ENCODE measurements at regions of chr22 and their contacts with region 1.

Region 1: GRCh38 chr22:29635734-29636357 is 32.4 kb downstream of the NF2 start:
- DNase-seq: no peak
- H3K4me3 ChIP-seq: no peak overlapping the region
- H3K27ac ChIP-seq: peak overlapping the region in 1 of 3 donors; percentile 41
- H3K4me1 ChIP-seq: peaks cover 10 to 16% of the 10 kb centered on the region in 2 donors
- H3K27me3 ChIP-seq: no peaks in the 10 kb centered on the region
- CTCF ChIP-seq: peak; percentile 34 to 79 (median 62)
- POLR2A ChIP-seq: no peak

Region 2: DNA sequence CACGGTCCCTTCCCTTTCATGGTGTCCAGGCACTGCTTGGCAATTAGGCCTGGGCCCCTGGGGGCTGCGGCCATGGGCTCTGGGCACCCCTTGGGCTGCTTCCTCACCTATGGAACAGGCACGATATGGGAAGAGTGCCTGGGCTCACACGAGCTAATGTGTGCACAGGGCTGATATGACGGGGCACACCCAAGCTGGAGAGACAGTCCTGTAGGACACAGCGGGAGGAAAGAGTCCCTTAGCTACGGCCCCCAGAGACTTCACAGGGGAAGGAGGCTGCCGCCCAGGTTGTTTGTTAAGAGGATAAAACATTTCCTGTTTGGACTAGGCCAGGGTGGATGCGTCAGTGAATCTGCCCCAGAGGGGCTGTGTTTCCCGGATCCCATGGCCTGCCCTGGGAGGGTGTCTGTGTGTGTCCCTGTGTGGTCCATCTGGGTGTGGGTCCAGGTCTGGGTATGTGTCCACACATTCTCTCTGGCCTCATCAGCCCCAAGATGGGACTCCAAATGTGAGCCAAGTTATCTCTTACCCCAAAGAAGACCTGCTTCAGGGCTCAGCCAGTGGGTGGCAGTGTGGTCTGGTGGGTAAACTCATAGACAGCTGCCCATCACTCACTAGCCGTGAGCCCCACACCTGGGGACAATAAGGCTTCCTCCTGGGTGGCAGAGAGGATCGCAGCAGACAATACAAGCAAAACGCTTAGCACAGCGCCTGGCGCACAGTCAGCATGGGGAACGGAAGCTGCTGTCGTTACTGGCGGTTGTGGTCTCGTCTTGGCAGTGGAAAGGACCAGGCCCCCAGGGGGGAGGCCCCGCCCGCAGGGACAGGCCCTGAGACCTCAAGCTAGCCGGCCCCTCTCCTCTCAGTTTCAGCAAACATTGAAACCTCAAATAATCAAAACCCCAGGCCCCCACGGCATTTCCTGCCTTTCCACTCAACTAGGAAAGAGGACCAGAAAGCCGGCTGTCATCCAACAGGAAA is 433.3 kb before region 1 on chr22:
- intact Hi-C with region 1: no loop called
- DNase-seq: peak; percentile 30 to 34
- H3K4me3 ChIP-seq: no peak overlapping the region
- H3K27ac ChIP-seq: peak overlapping the region; percentile 35 to 63 (median 57)
- H3K4me1 ChIP-seq: peaks cover 8 to 17% of the 10 kb centered on the region in 2 donors
- H3K27me3 ChIP-seq: no peaks in the 10 kb centered on the region
- CTCF ChIP-seq: peak in 2 of 6 experiments; percentile 20
- POLR2A ChIP-seq: no peak

Region 3: GRCh38 chr22:29689880-29690213 is 54.0 kb after region 1 on chr22:
- intact Hi-C with region 1: loop called (anchors 10 kb)
- DNase-seq: peak; percentile 32 to 55
- H3K4me3 ChIP-seq: no peak overlapping the region
- H3K27ac ChIP-seq: no peak overlapping the region
- H3K4me1 ChIP-seq: peaks cover 15% of the 10 kb centered on the region in 2 donors
- H3K27me3 ChIP-seq: no peaks in the 10 kb centered on the region
- CTCF ChIP-seq: peak in 5 of 6 experiments; percentile 12 to 56 (median 40)
- POLR2A ChIP-seq: no peak

Region 4: DNA sequence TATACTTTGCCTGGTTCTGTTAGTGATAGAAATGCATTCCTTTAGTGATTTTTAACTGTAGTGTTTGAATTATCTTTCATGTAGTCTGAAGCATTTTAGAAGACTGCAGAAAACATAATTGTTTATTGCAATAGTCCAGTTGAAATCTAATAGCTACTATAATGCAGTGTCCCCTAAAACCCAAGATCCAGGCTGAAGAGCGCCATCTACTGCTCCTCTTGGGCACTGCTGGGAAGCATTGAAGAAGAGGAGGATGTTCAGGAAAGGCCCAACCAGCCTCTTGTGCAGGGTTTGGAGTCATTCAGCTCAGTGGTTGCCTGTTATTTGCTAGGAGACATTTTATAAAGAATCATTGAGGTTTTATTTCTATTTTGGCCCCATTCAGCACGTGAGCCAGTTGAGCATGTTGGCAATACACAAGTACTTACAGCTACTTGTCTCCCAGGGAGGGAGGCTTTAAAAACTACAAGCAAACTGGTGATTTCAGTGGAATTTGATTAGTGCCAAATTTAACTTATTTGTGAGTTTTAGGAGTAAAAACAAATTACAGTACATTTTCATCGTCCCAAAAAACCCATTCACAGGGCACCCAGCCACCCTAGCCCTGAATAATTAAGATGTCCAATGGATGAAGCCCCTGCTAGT is 369.5 kb after region 1 on chr22:
- intact Hi-C with region 1: loop called (anchors 10 kb)
- DNase-seq: peak; percentile 76 to 83
- H3K4me3 ChIP-seq: no peak overlapping the region
- H3K27ac ChIP-seq: no peak overlapping the region
- H3K4me1 ChIP-seq: peaks cover 12 to 18% of the 10 kb centered on the region in 2 donors
- H3K27me3 ChIP-seq: no peaks in the 10 kb centered on the region
- CTCF ChIP-seq: peak; percentile 71 to 94 (median 92)
- POLR2A ChIP-seq: no peak

Region 5: DNA sequence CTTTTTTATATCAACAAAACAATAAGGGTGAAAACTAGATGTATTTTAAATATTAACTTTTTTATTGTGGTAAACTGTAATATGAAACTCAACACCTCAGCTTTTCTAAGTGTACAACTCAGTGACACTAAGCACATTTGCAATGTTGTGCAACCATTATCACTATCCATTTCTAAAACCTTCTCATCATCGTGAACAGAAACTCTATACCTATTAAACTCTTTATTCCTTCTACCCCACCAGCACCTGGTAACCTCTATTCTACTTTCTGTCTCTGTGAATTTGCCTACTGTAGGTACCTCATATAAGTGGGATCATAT is 453.8 kb after region 1 on chr22:
- intact Hi-C with region 1: loop called (anchors 5 kb)
- DNase-seq: no peak
- H3K4me3 ChIP-seq: no peak overlapping the region
- H3K27ac ChIP-seq: no peak overlapping the region
- H3K4me1 ChIP-seq: no peaks in the 10 kb centered on the region
- H3K27me3 ChIP-seq: no peaks in the 10 kb centered on the region
- CTCF ChIP-seq: no peak
- POLR2A ChIP-seq: no peak

Measured in thyroid gland (tissue), 4 donors.